Activated CD4-positive, alpha-beta memory T cell treated with anti-CD3 and anti-CD28 coated beads, Interleukin-2, amount 10 ng/mL, durations not matched to agents 7 days and 5 days (primary cell): ENCODE measurements at regions of chr22 and their contacts with region 1.

Region 1: GRCh38 chr22:41780746-41781505 is 19.6 kb upstream of the CCDC134 start:
- DNase-seq: peak; percentile 96
- H3K4me3 Mint-ChIP-seq: peak overlapping the region; percentile 85
- H3K27ac Mint-ChIP-seq: peak overlapping the region; percentile 97
- H3K4me1 Mint-ChIP-seq: peaks cover 46% of the 10 kb centered on the region
- H3K27me3 Mint-ChIP-seq: no peaks in the 10 kb centered on the region

Region 2: DNA sequence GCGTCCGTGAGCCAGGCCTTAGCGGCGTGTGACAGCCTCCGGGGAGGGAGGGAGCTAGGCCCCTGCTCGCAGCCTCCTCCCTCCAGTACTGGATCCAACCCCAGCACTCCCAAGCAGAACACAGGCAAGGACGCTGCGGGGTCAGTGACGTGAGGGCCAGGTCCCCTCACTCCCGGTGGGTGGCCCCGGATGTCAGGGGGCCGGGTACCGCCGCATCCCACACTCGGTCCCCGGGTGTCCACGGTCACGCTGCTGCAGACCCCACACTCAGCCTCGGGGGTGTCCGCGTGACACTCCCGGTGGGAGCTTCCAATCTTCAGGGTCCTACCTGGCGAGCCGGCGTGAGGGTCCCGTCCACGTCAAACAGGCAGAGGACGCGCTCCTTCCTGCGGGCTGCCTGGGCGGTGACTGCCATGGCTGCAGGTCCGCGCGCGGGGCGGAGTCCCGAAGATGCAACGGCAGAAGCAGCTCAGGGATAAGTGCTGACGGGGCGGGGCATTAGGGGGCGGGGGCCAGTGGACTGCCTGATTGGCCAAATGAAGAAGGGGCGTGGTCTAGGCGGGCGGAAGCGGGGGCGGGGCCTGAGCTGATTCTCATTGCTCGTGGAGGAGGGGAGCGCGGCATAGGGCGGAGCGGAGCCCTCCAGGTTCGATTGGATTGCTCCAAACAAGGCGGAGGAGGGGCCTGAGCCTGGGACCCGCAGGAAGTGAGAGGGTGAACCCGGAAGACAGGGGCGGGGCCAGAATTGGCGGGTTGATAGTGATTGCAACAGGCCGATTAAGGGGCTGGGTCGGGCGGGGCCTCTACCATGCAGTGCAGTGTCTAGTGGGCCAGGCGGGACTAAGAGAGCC is 191.3 kb before region 1 on chr22 and contains the start of gene PMM1:
- CTCF ChIA-PET with region 1: no interaction called
- POLR2A ChIA-PET with region 1: no interaction called
- DNase-seq: peak; percentile 100
- H3K4me3 Mint-ChIP-seq: peak within 1 kb of the TSS; percentile 96
- H3K27ac Mint-ChIP-seq: peak within 1 kb of the TSS; percentile 87
- H3K4me1 Mint-ChIP-seq: peaks cover 26% of the 10 kb centered on the region
- H3K27me3 Mint-ChIP-seq: no peaks in the 10 kb centered on the region
- total RNA-seq, gene PMM1: 44.4 to 46.2 TPM

Region 3: GRCh38 chr22:41688365-41689211 is 92.3 kb before region 1 on chr22 and contains the start of gene SNU13:
- CTCF ChIA-PET with region 1: no interaction called
- POLR2A ChIA-PET with region 1: interaction called, 40 read pairs
- DNase-seq: peak; percentile 95
- H3K4me3 Mint-ChIP-seq: peak within 1 kb of the TSS; percentile 95
- H3K27ac Mint-ChIP-seq: peak within 1 kb of the TSS; percentile 92
- H3K4me1 Mint-ChIP-seq: peaks cover 40% of the 10 kb centered on the region
- H3K27me3 Mint-ChIP-seq: no peaks in the 10 kb centered on the region
- total RNA-seq, gene SNU13: 166 to 176 TPM

Region 4: GRCh38 chr22:41697126-41697775 is 83.7 kb before region 1 on chr22:
- CTCF ChIA-PET with region 1: interaction called, 24 read pairs
- POLR2A ChIA-PET with region 1: interaction called, 33 read pairs
- DNase-seq: peak; percentile 91
- H3K4me3 Mint-ChIP-seq: no peak overlapping the region
- H3K27ac Mint-ChIP-seq: peak overlapping the region; percentile 68
- H3K4me1 Mint-ChIP-seq: peaks cover 18% of the 10 kb centered on the region
- H3K27me3 Mint-ChIP-seq: peaks cover 4% of the 10 kb centered on the region

Region 5: GRCh38 chr22:41746567-41747400 is 34.1 kb before region 1 on chr22:
- CTCF ChIA-PET with region 1: interaction called, 21 read pairs
- POLR2A ChIA-PET with region 1: interaction called, 26 read pairs
- DNase-seq: peak; percentile 58
- H3K4me3 Mint-ChIP-seq: no peak overlapping the region
- H3K27ac Mint-ChIP-seq: no peak overlapping the region
- H3K4me1 Mint-ChIP-seq: peaks cover 11% of the 10 kb centered on the region
- H3K27me3 Mint-ChIP-seq: peaks cover 18% of the 10 kb centered on the region

Region 6: DNA sequence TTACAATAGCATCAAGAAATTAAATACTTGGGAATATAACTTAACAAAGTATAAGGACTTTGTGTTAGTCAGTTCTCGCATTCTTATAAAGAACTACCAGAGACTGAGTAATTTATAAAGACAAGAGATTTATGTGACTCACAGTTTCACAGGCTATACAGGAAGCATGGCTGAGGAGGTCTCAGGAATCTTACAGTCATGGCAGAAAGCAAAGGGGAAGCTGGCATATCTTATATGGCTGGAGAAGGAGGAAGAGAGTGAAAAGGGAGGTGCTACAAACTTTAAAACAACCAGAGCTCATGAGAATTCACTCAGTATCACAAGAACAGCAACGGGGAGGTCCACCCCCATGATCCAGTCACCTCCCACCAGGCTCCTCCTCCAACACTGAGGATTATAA is 12.5 kb before region 1 on chr22:
- CTCF ChIA-PET with region 1: interaction called, 5 read pairs
- POLR2A ChIA-PET with region 1: interaction called, 25 read pairs
- DNase-seq: no peak
- H3K4me3 Mint-ChIP-seq: no peak overlapping the region
- H3K27ac Mint-ChIP-seq: no peak overlapping the region
- H3K4me1 Mint-ChIP-seq: peaks cover 18% of the 10 kb centered on the region
- H3K27me3 Mint-ChIP-seq: peaks cover 2% of the 10 kb centered on the region

Region 7: GRCh38 chr22:41820447-41820846 is 39.5 kb after region 1 on chr22:
- CTCF ChIA-PET with region 1: no interaction called
- POLR2A ChIA-PET with region 1: no interaction called
- DNase-seq: no peak
- H3K4me3 Mint-ChIP-seq: no peak overlapping the region
- H3K27ac Mint-ChIP-seq: no peak overlapping the region
- H3K4me1 Mint-ChIP-seq: peaks cover 15% of the 10 kb centered on the region
- H3K27me3 Mint-ChIP-seq: no peaks in the 10 kb centered on the region